ENCODE measurements at regions of chr17 and their contacts with region 1.

Region 1: GRCh38 chr17:55527540-55528118 is 16.4 kb upstream of the SMIM36 start:
- DNase-seq: peak; percentile 42
- ATAC-seq: no peak
- H3K4me3 ChIP-seq: no peak overlapping the region
- H3K27ac ChIP-seq: no peak overlapping the region
- H3K4me1 ChIP-seq: no peaks in the 10 kb centered on the region
- H3K27me3 ChIP-seq: 0 out of 2 replicates have a peak, but pooled peaks cover 9% of the 10 kb centered on the region
- CTCF ChIP-seq: peak; percentile 55 to 58 (median 57); a peak in 5 of 6 replicates
- POLR2A ChIP-seq: no peak
- RAD21 ChIP-seq: peak; percentile 76

Region 2: GRCh38 chr17:55452139-55452790 is 75.4 kb before region 1 on chr17:
- CTCF ChIA-PET with region 1: no interaction called
- POLR2A ChIA-PET with region 1: no interaction called
- RAD21 ChIA-PET with region 1: no interaction called
- intact Hi-C with region 1: no loop called
- DNase-seq: no peak
- ATAC-seq: peak; percentile 71
- H3K4me3 ChIP-seq: no peak overlapping the region
- H3K27ac ChIP-seq: no peak overlapping the region
- H3K4me1 ChIP-seq: peaks cover 0 to 15% of the 10 kb centered on the region in 2 experiments; a peak in 2 of 4 replicates
- H3K27me3 ChIP-seq: no peaks in the 10 kb centered on the region
- CTCF ChIP-seq: no peak
- POLR2A ChIP-seq: no peak
- RAD21 ChIP-seq: no peak

Region 3: DNA sequence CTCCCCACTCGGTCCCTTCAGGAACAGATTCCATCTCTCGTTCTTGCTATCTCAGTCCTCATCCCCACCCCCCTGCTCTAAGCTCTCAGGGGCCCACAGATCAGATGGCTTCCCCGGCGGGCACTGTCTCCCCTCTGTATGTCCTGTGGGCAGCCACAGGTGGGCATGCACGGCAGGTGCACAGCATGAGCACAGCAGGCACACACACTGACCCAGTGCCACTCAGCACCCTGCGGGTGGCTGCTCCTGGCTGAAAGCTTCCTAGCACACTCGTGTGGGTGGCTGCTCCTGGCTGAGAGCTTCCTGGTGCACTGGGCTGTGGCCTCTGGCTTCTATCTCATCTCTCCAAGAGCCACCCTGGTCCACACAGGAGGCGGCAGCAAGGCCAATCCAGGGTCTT is 28.1 kb after region 1 on chr17:
- CTCF ChIA-PET with region 1: no interaction called
- POLR2A ChIA-PET with region 1: no interaction called
- RAD21 ChIA-PET with region 1: no interaction called
- intact Hi-C with region 1: no loop called
- DNase-seq: no peak
- ATAC-seq: no peak
- H3K4me3 ChIP-seq: no peak overlapping the region
- H3K27ac ChIP-seq: no peak overlapping the region
- H3K4me1 ChIP-seq: no peaks in the 10 kb centered on the region
- H3K27me3 ChIP-seq: peaks cover 36% of the 10 kb centered on the region
- CTCF ChIP-seq: no peak
- POLR2A ChIP-seq: no peak
- RAD21 ChIP-seq: no peak

Region 4: DNA sequence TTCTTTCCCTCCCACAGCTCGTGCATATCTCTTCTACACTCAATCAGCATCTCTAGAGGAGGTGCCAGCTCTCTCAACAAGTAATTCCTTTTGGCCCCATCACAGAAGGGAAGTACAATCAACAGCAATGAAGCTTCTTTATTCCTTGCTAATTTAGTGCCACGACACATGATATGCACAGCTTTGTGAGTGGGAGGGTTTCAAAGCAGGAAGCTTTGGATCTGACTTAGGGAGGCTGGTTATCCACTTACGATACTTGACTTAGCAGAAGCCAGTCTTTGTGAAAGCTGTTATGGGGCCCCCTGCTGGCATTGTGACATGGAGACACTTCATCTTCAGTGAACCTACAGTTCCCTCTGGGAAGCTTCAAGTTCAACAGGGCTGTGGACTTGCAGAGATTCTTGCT is 114.0 kb after region 1 on chr17:
- CTCF ChIA-PET with region 1: interaction called, 9 read pairs
- POLR2A ChIA-PET with region 1: no interaction called
- RAD21 ChIA-PET with region 1: no interaction called
- intact Hi-C with region 1: loop called (anchors 1 kb)
- DNase-seq: peak; percentile 57
- ATAC-seq: peak; percentile 93
- H3K4me3 ChIP-seq: no peak overlapping the region
- H3K27ac ChIP-seq: no peak overlapping the region
- H3K4me1 ChIP-seq: no peaks in the 10 kb centered on the region
- H3K27me3 ChIP-seq: peaks cover 56% of the 10 kb centered on the region
- CTCF ChIP-seq: peak; percentile 36 to 86 (median 71); a peak in 5 of 6 replicates
- POLR2A ChIP-seq: no peak
- RAD21 ChIP-seq: peak; percentile 47

Region 5: DNA sequence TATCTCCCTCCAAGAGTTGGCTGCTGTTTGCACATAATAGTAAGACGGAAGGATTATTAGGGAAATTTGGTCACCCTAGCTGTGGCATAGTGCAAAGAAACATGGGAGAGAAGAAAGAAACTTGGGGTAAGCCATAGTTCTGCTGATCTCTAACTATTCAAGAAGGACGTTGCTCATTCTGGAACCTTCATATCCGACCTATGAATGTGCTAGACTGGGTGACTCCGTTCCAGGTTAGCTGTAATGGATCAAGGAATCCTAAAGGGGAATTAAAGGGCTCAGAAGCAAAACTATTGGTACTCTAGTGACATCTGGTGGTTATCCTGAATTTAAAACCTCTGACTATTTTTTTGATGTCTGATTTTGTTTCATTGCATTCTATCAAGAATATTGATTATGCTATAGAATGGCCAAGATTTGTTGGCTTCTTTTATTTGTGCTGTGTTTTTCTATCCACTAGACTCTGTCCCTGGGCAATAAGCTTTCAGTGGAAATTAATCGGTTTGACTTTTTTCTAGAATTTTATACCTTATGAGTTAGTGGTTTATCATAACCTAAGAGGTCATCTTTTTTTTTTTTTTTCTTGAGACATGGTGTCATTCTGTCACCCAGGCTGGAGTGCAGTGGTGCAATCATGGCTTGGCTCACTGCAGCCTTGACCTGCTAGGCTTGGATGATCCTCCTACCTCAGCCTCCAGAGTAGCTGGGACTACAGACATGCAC is 242.7 kb after region 1 on chr17:
- CTCF ChIA-PET with region 1: interaction called, 25 read pairs
- POLR2A ChIA-PET with region 1: no interaction called
- RAD21 ChIA-PET with region 1: interaction called, 3 read pairs
- intact Hi-C with region 1: loop called (anchors 1 kb)
- DNase-seq: peak; percentile 43
- ATAC-seq: peak; percentile 90
- H3K4me3 ChIP-seq: no peak overlapping the region
- H3K27ac ChIP-seq: no peak overlapping the region
- H3K4me1 ChIP-seq: no peaks in the 10 kb centered on the region
- H3K27me3 ChIP-seq: no peaks in the 10 kb centered on the region
- CTCF ChIP-seq: peak; percentile 48 to 83 (median 77)
- POLR2A ChIP-seq: no peak
- RAD21 ChIP-seq: peak; percentile 82

Region 6: GRCh38 chr17:56319517-56319916 is 791.9 kb after region 1 on chr17:
- CTCF ChIA-PET with region 1: no interaction called
- POLR2A ChIA-PET with region 1: no interaction called
- RAD21 ChIA-PET with region 1: no interaction called
- intact Hi-C with region 1: loop called (anchors 2 kb)
- DNase-seq: peak; percentile 55
- ATAC-seq: peak; percentile 89
- H3K4me3 ChIP-seq: no peak overlapping the region
- H3K27ac ChIP-seq: no peak overlapping the region
- H3K4me1 ChIP-seq: no peaks in the 10 kb centered on the region
- H3K27me3 ChIP-seq: peaks cover 38% of the 10 kb centered on the region
- CTCF ChIP-seq: peak; percentile 54 to 83 (median 63); a peak in 5 of 6 replicates
- POLR2A ChIP-seq: no peak
- RAD21 ChIP-seq: peak; percentile 78

Measured in HCT116 (cell line).